ENCODE measurements at regions of chr1 and their contacts with region 1.

Region 1: DNA sequence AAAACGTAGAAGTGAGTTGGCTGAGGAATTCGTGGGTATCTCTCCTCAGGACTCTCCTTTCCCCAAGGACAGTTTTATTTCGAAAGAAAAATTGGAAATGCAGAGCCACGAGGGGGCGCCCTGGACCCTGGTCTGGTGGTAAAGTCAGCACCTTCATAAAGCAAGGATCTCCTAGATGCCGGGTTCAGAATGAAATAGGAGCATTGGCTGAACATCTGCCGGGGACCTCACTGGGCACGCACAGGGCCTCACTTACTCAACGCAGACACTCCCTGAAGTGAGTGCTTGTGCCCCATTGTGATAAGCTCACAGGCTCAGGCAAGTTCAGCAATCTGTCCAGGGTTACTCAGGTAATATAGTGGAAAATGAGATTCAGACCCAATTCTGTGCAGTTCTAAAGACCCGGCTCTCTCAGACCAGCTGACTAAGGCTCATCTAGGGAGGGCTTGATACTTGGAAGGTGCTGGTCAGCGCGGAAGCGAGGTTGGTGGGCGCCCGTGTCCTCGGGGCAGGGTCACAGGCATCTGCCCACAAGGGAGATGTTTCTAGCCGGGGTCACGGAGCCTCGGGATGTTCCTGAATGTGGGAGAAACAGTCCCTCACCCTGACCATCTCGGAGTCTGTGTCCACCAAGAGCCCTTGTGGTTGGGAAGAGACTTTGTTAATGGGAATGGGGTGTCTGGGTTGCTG is 55.7 kb upstream of the ETV3 start:
- DNase-seq: peak; percentile 80 to 85
- H3K4me3 ChIP-seq: no peak overlapping the region
- H3K4me3 Mint-ChIP-seq: no peak overlapping the region
- H3K27ac Mint-ChIP-seq: no peak overlapping the region
- H3K4me1 ChIP-seq: peaks cover 8% of the 10 kb centered on the region; the same call in 1 of the 2 replicates
- H3K4me1 Mint-ChIP-seq: no peaks in the 10 kb centered on the region
- H3K27me3 ChIP-seq: no peaks in the 10 kb centered on the region
- H3K27me3 Mint-ChIP-seq: no peaks in the 10 kb centered on the region
- CTCF ChIP-seq: peak; percentile 79 to 84

Region 2: GRCh38 chr1:157240495-157241184 is 46.8 kb after region 1 on chr1:
- CTCF ChIA-PET with region 1: no interaction called
- POLR2A ChIA-PET with region 1: no interaction called
- intact Hi-C with region 1: loop called (anchors 2 kb)
- DNase-seq: peak; percentile 84 to 88
- H3K4me3 ChIP-seq: no peak overlapping the region
- H3K4me3 Mint-ChIP-seq: peak overlapping the region; percentile 36
- H3K27ac Mint-ChIP-seq: peak overlapping the region; percentile 91
- H3K4me1 ChIP-seq: peaks cover 50% of the 10 kb centered on the region
- H3K4me1 Mint-ChIP-seq: peaks cover 43% of the 10 kb centered on the region
- H3K27me3 ChIP-seq: no peaks in the 10 kb centered on the region
- H3K27me3 Mint-ChIP-seq: no peaks in the 10 kb centered on the region
- CTCF ChIP-seq: no peak

Region 3: GRCh38 chr1:157505481-157506272 is 311.8 kb after region 1 on chr1:
- CTCF ChIA-PET with region 1: interaction called, 3 read pairs
- POLR2A ChIA-PET with region 1: no interaction called
- intact Hi-C with region 1: loop called (anchors 1 kb)
- DNase-seq: peak; percentile 63 to 73
- H3K4me3 ChIP-seq: no peak overlapping the region
- H3K4me3 Mint-ChIP-seq: no peak overlapping the region
- H3K27ac Mint-ChIP-seq: no peak overlapping the region
- H3K4me1 ChIP-seq: peaks cover 26% of the 10 kb centered on the region
- H3K4me1 Mint-ChIP-seq: peaks cover 14% of the 10 kb centered on the region
- H3K27me3 ChIP-seq: no peaks in the 10 kb centered on the region
- H3K27me3 Mint-ChIP-seq: no peaks in the 10 kb centered on the region
- CTCF ChIP-seq: peak; percentile 65 to 84

Measured in Caco-2 (cell line).